ENCODE measurements at regions of chr15 and their contacts with region 1.

Region 1: GRCh38 chr15:47987908-47988532 is 132.8 kb upstream of the SLC24A5 start:
- DNase-seq: peak in 1 of 2 donors; percentile 45
- H3K4me3 ChIP-seq: no peak overlapping the region
- CTCF ChIP-seq: no peak
- POLR2A ChIP-seq: no peak

Region 2: DNA sequence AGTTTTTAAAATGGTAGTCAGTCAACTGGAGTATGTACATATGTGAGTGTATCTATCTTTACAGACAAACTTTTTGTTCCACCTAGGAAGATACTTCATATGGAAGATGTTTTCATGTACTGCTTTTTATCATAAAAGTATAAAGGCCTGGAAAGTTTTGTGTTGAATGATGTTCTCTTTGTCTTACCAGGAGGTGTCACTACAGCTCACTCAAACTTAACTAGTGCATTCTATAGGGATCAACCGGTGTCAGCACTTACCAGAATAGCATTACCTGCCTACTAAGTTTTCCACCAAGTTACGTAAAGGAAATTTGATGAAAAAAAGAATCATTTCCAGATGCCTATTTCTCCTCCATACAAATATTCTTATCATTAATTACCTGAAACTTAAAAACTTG is 793.3 kb before region 1 on chr15:
- intact Hi-C with region 1: loop called (anchors 5 kb)
- DNase-seq: no peak
- H3K4me3 ChIP-seq: no peak overlapping the region
- CTCF ChIP-seq: no peak
- POLR2A ChIP-seq: no peak

Region 3: DNA sequence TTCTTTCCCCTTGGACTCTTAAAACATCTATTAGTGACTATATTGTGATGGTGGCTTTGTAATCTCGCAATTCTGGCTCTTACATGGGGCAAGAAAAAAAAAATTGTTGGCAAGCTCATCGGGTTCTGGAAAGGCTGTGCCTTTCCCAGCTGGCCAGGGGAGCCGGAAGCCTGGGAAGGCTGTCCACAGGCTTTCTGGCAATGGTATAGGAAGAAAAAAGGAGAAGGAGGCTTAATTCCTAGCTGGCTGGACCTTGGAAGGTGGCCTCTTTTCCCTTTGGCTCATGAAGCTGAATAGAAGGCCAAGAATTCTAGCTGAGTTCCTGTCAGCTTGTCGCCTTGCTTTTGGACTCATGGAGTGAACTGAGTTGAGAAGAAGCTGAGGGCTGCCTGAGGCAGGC is 514.2 kb before region 1 on chr15:
- intact Hi-C with region 1: loop called (anchors 10 kb)
- DNase-seq: peak; percentile 15 to 79
- H3K4me3 ChIP-seq: no peak overlapping the region
- CTCF ChIP-seq: no peak
- POLR2A ChIP-seq: no peak

Region 4: GRCh38 chr15:47736143-47736786 is 251.8 kb before region 1 on chr15:
- intact Hi-C with region 1: no loop called
- DNase-seq: no peak
- H3K4me3 ChIP-seq: no peak overlapping the region
- CTCF ChIP-seq: no peak
- POLR2A ChIP-seq: no peak

Region 5: DNA sequence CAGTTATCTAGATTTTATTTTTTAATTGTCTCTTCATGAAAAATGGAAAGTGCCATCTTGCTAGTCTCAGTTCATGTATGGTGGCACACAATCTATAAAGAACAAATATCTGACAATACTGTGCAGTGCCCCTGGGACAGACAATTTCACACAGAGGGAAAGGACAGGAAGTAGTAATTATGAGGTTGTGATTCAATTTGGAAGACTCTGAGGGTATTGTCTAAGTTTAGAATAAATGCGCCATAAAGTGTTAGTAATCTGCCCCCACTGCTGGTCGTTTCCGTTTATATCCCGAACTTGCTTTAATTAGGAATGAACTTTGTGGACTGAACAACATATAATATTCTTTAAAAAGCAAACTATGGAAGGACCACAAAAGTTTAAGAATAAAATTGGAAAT is 63.6 kb before region 1 on chr15:
- intact Hi-C with region 1: no loop called
- DNase-seq: no peak
- H3K4me3 ChIP-seq: no peak overlapping the region
- CTCF ChIP-seq: no peak
- POLR2A ChIP-seq: no peak

Measured in lower leg skin (tissue), 4 donors.